ENCODE measurements at regions of chr10 and their contacts with region 1.

Region 1: GRCh38 chr10:95864906-95865813 is 42.6 kb upstream of the CC2D2B start:
- DNase-seq: peak in 7 of 9 donors; percentile 10 to 40 (median 24)
- ATAC-seq: peak; percentile 88
- H3K4me3 ChIP-seq: no peak overlapping the region
- H3K4me3 Mint-ChIP-seq: peak overlapping the region in 1 of 10 donors; percentile 24
- H3K27ac ChIP-seq: no peak overlapping the region
- H3K27ac Mint-ChIP-seq: peak overlapping the region in 1 of 9 donors; percentile 83
- H3K4me1 ChIP-seq: no peaks in the 10 kb centered on the region
- H3K4me1 Mint-ChIP-seq: peaks cover 0 to 37% (median 0%) of the 10 kb centered on the region in 7 donors
- H3K27me3 ChIP-seq: no peaks in the 10 kb centered on the region
- H3K27me3 Mint-ChIP-seq: peaks cover 0 to 3% (median 0%) of the 10 kb centered on the region in 5 donors

Region 2: DNA sequence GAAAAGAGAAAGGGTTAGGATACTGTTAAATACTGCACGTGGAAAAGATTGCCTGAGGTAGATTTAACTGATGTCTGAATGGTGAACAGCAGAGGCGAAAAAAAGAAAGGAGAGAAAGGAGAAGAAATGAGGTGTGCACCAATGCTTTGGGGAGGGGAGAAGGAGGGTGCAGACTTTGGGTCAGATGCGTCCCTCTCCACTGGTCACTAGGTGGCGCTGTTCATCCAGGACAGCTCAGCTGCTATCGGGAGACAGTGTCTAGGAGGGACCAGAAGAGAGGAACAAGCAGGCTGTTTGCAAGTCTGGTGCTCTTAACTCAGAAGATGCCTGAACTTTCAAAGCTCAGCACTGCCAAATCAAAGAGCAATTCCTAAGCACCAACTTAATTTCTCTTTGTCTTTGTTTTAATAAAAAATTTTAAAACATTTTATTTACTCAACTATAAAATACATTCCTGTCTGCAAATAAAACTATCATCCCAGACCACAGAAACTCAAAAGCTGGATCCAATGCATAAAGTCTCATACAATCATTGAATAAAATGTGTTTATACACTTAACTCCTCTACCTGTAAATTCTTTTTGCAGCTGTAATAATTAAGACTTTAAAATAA is 490.5 kb before region 1 on chr10:
- CTCF ChIA-PET with region 1: no interaction called
- POLR2A ChIA-PET with region 1: no interaction called
- intact Hi-C with region 1: no loop called
- DNase-seq: peak in 4 of 9 donors; percentile 8 to 70 (median 15)
- ATAC-seq: peak; percentile 89
- H3K4me3 ChIP-seq: no peak overlapping the region
- H3K4me3 Mint-ChIP-seq: no peak overlapping the region
- H3K27ac ChIP-seq: no peak overlapping the region
- H3K27ac Mint-ChIP-seq: no peak overlapping the region
- H3K4me1 ChIP-seq: no peaks in the 10 kb centered on the region
- H3K4me1 Mint-ChIP-seq: peaks cover 0 to 6% (median 4%) of the 10 kb centered on the region in 7 donors
- H3K27me3 ChIP-seq: no peaks in the 10 kb centered on the region
- H3K27me3 Mint-ChIP-seq: peaks cover 8 to 56% (median 17%) of the 10 kb centered on the region in 5 donors

Region 3: GRCh38 chr10:95430231-95430951 is 434.8 kb before region 1 on chr10:
- CTCF ChIA-PET with region 1: interaction called, 4 read pairs
- POLR2A ChIA-PET with region 1: no interaction called
- intact Hi-C with region 1: loop called (anchors 2 to 5 kb)
- DNase-seq: peak in 8 of 9 donors; percentile 14 to 52 (median 34)
- ATAC-seq: peak; percentile 89
- H3K4me3 ChIP-seq: no peak overlapping the region
- H3K4me3 Mint-ChIP-seq: no peak overlapping the region
- H3K27ac ChIP-seq: no peak overlapping the region
- H3K27ac Mint-ChIP-seq: no peak overlapping the region
- H3K4me1 ChIP-seq: no peaks in the 10 kb centered on the region
- H3K4me1 Mint-ChIP-seq: peaks cover 0 to 2% (median 0%) of the 10 kb centered on the region in 7 donors
- H3K27me3 ChIP-seq: no peaks in the 10 kb centered on the region
- H3K27me3 Mint-ChIP-seq: peaks cover 0 to 3% (median 0%) of the 10 kb centered on the region in 5 donors

Region 4: GRCh38 chr10:95741807-95742467 is 123.2 kb before region 1 on chr10:
- CTCF ChIA-PET with region 1: no interaction called
- POLR2A ChIA-PET with region 1: no interaction called
- intact Hi-C with region 1: no loop called
- DNase-seq: no peak
- ATAC-seq: no peak
- H3K4me3 ChIP-seq: no peak overlapping the region
- H3K4me3 Mint-ChIP-seq: no peak overlapping the region
- H3K27ac ChIP-seq: no peak overlapping the region
- H3K27ac Mint-ChIP-seq: no peak overlapping the region
- H3K4me1 ChIP-seq: no peaks in the 10 kb centered on the region
- H3K4me1 Mint-ChIP-seq: peaks cover 0 to 21% (median 4%) of the 10 kb centered on the region in 7 donors
- H3K27me3 ChIP-seq: no peaks in the 10 kb centered on the region
- H3K27me3 Mint-ChIP-seq: peaks cover 4 to 24% (median 7%) of the 10 kb centered on the region in 5 donors

Region 5: GRCh38 chr10:95841661-95842498 is 23.3 kb before region 1 on chr10:
- CTCF ChIA-PET with region 1: interaction called, 3 read pairs
- POLR2A ChIA-PET with region 1: no interaction called
- intact Hi-C with region 1: loop called in 1 of 2 experiments (anchors 1 kb)
- DNase-seq: peak in 7 of 9 donors; percentile 4 to 47 (median 28)
- ATAC-seq: peak; percentile 80
- H3K4me3 ChIP-seq: no peak overlapping the region
- H3K4me3 Mint-ChIP-seq: peak overlapping the region in 1 of 10 donors; percentile 62
- H3K27ac ChIP-seq: no peak overlapping the region
- H3K27ac Mint-ChIP-seq: peak overlapping the region in 1 of 9 donors; percentile 89
- H3K4me1 ChIP-seq: no peaks in the 10 kb centered on the region
- H3K4me1 Mint-ChIP-seq: peaks cover 0 to 59% (median 6%) of the 10 kb centered on the region in 7 donors
- H3K27me3 ChIP-seq: no peaks in the 10 kb centered on the region
- H3K27me3 Mint-ChIP-seq: peaks cover 0 to 9% (median 3%) of the 10 kb centered on the region in 5 donors

Region 6: DNA sequence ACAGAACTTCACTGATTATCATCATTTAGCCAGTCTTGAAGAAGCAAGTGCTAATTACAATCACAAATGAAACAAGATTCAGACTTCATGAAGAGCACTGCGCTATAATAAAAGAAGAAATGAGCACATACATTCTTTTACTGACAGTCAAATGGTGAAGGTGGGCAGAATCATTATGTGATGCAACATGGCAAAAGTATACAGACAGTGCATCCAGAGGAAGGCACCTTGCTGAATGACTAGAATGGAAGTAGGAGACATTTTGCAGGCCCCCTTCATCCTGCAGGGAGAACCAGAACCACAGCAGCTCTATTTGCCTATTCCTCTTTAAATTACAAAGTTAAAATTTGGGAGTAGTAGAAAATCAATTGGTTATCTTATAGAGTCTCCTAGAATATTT is 11.6 kb after region 1 on chr10:
- CTCF ChIA-PET with region 1: no interaction called
- POLR2A ChIA-PET with region 1: no interaction called
- intact Hi-C with region 1: no loop called
- DNase-seq: no peak
- ATAC-seq: no peak
- H3K4me3 ChIP-seq: no peak overlapping the region
- H3K4me3 Mint-ChIP-seq: no peak overlapping the region
- H3K27ac ChIP-seq: no peak overlapping the region
- H3K27ac Mint-ChIP-seq: peak overlapping the region in 1 of 9 donors; percentile 48
- H3K4me1 ChIP-seq: no peaks in the 10 kb centered on the region
- H3K4me1 Mint-ChIP-seq: no peaks in the 10 kb centered on the region
- H3K27me3 ChIP-seq: no peaks in the 10 kb centered on the region
- H3K27me3 Mint-ChIP-seq: no peaks in the 10 kb centered on the region

Measured in naive thymus-derived CD4-positive, alpha-beta T cell (primary cell).